GM12878 (cell line): ENCODE measurements at regions of chr20 and their contacts with region 1.

Region 1: GRCh38 chr20:3710703-3711483 is 1.5 kb downstream of the SIGLEC1 start:
- DNase-seq: no peak
- ATAC-seq: peak; percentile 89
- H3K4me3 ChIP-seq: no peak overlapping the region
- H3K27ac ChIP-seq: no peak overlapping the region
- H3K4me1 ChIP-seq: peaks cover 5% of the 10 kb centered on the region
- H3K27me3 ChIP-seq: no peaks in the 10 kb centered on the region
- CTCF ChIP-seq: peak; percentile 84 to 93 (median 85)
- EP300 ChIP-seq: no peak
- POLR2A ChIP-seq: no peak
- RAD21 ChIP-seq: peak; percentile 80

Region 2: GRCh38 chr20:3218307-3218988 is 492.4 kb before region 1 on chr20:
- CTCF ChIA-PET with region 1: interaction called, 4 read pairs
- POLR2A ChIA-PET with region 1: no interaction called
- RAD21 ChIA-PET with region 1: no interaction called
- SMC1A ChIA-PET with region 1: no interaction called
- in situ Hi-C with region 1: no loop called
- intact Hi-C with region 1: loop called (anchors 5 kb)
- DNase-seq: no peak
- ATAC-seq: peak; percentile 98
- H3K4me3 ChIP-seq: no peak overlapping the region
- H3K27ac ChIP-seq: no peak overlapping the region
- H3K4me1 ChIP-seq: peaks cover 15% of the 10 kb centered on the region
- H3K27me3 ChIP-seq: no peaks in the 10 kb centered on the region
- CTCF ChIP-seq: peak; percentile 78 to 89 (median 87)
- EP300 ChIP-seq: no peak
- POLR2A ChIP-seq: no peak
- RAD21 ChIP-seq: peak; percentile 76

Region 3: DNA sequence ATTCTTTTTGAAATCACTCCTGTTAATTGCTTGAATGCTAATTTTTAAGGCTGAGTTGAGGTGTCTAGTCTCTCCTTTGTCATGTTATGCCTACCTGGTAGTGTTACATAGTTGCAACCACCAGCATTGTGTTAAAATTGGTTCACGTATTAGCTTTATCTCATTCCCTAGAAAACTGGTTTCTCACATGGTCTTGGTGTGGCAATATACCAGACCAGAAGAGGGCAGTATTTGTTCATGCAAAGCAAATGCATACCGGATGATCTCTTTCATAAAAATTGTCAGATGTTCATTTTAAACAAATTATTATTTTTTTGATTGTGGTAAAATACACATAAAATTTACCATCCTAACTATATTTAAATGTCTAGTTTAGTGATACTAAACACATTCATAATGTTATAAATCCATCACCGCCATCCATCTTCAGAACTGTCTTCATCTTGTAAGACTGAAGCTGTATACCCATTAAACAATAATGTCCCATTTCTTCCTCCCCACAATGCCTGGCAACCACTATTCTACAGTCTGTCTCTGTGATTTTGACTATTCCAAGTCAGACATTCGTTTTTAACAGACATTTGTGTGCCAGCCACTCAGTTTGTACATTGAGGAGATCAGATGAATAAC is 147.2 kb before region 1 on chr20:
- CTCF ChIA-PET with region 1: interaction called, 49 read pairs
- POLR2A ChIA-PET with region 1: interaction called, 3 read pairs
- RAD21 ChIA-PET with region 1: interaction called, 14 read pairs
- SMC1A ChIA-PET with region 1: interaction called, 22 read pairs
- in situ Hi-C with region 1: no loop called
- intact Hi-C with region 1: loop called (anchors 1 kb)
- DNase-seq: peak; percentile 8
- ATAC-seq: peak; percentile 75
- H3K4me3 ChIP-seq: no peak overlapping the region
- H3K27ac ChIP-seq: no peak overlapping the region
- H3K4me1 ChIP-seq: no peaks in the 10 kb centered on the region
- H3K27me3 ChIP-seq: no peaks in the 10 kb centered on the region
- CTCF ChIP-seq: peak; percentile 63 to 68 (median 66)
- EP300 ChIP-seq: no peak
- POLR2A ChIP-seq: no peak
- RAD21 ChIP-seq: peak; percentile 88

Region 4: GRCh38 chr20:3679749-3680700 is 30.9 kb before region 1 on chr20:
- CTCF ChIA-PET with region 1: interaction called, 51 read pairs
- POLR2A ChIA-PET with region 1: interaction called, 3 read pairs
- RAD21 ChIA-PET with region 1: interaction called, 13 read pairs
- SMC1A ChIA-PET with region 1: interaction called, 8 read pairs
- in situ Hi-C with region 1: no loop called
- intact Hi-C with region 1: loop called (anchors 1 kb)
- DNase-seq: no peak
- ATAC-seq: no peak
- H3K4me3 ChIP-seq: no peak overlapping the region
- H3K27ac ChIP-seq: no peak overlapping the region
- H3K4me1 ChIP-seq: no peaks in the 10 kb centered on the region; the same call in 1 of the 2 replicates
- H3K27me3 ChIP-seq: peaks cover 3% of the 10 kb centered on the region in 2 experiments; a peak in 2 of 4 replicates
- CTCF ChIP-seq: no peak
- EP300 ChIP-seq: no peak
- POLR2A ChIP-seq: no peak
- RAD21 ChIP-seq: no peak

Region 5: DNA sequence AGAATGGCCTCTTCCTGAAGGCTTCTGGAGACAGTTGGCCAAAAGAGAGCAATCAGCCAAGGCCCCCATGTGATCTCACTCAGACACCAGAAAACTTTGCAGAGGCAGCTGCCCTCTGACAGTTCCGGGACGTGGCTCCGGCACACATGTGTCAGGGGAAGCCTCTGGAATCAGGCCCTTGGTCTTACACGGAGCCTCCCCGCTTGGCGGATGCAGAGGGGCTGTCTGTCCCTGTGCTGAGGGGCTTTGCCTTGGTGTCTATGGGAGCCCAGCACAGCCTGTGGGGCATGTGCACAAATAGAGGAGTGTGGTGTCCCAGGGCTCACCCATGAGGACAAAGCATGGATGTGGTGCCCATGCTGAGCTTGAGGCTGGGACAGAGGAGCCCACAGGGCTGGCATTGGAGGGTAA is 12.3 kb before region 1 on chr20:
- CTCF ChIA-PET with region 1: interaction called, 12 read pairs
- POLR2A ChIA-PET with region 1: no interaction called
- RAD21 ChIA-PET with region 1: interaction called, 3 read pairs
- SMC1A ChIA-PET with region 1: no interaction called
- in situ Hi-C with region 1: no loop called
- intact Hi-C with region 1: no loop called
- DNase-seq: no peak
- ATAC-seq: no peak
- H3K4me3 ChIP-seq: no peak overlapping the region
- H3K27ac ChIP-seq: no peak overlapping the region
- H3K4me1 ChIP-seq: no peaks in the 10 kb centered on the region
- H3K27me3 ChIP-seq: no peaks in the 10 kb centered on the region; a peak in 1 of 4 replicates
- CTCF ChIP-seq: no peak
- EP300 ChIP-seq: no peak
- POLR2A ChIP-seq: no peak
- RAD21 ChIP-seq: no peak